ENCODE measurements at regions of chr12 and their contacts with region 1.

Region 1: GRCh38 chr12:49967042-49967776 is 5.5 kb downstream of the AQP5 start:
- DNase-seq: peak; percentile 87

Region 2: DNA sequence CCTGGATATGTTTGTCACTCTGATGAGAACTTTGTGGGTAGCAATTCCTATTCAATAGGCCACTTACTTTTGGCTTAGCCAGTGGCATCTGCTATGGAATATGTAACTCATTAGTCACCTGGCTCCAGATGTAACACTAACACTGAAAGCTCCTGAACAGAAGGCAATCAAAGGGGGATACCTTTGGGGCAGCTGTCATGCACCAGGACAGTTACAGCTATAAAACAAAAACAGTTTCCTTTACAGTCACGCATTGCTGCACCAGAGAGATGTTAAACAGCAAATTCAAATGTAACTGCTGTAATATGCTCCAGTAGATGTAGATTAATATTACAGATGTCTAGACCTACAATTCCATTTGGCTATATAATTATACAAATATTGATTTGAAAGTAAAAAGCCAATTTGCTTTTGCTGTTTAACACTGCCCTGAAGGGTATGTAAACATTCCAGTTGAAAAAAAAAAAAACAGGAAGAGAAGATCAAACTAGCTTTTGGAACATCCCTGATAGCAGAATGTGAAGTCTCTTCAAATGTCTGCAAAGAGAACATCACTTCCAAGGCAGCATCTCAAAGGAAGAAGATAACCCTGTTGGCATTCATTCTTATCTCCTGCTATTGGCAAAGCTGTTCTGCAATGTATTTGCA is 39.7 kb after region 1 on chr12:
- in situ Hi-C with region 1: no loop called
- DNase-seq: peak; percentile 45

Region 3: GRCh38 chr12:50074936-50075807 is 108.0 kb after region 1 on chr12:
- in situ Hi-C with region 1: loop called (anchors 25 kb)
- DNase-seq: peak; percentile 69

Region 4: GRCh38 chr12:50151047-50151687 is 184.0 kb after region 1 on chr12:
- in situ Hi-C with region 1: loop called (anchors 10 kb)
- DNase-seq: no peak